Stomach (tissue), 19 donors: ENCODE measurements at regions of chr3 and their contacts with region 1.

Region 1: DNA sequence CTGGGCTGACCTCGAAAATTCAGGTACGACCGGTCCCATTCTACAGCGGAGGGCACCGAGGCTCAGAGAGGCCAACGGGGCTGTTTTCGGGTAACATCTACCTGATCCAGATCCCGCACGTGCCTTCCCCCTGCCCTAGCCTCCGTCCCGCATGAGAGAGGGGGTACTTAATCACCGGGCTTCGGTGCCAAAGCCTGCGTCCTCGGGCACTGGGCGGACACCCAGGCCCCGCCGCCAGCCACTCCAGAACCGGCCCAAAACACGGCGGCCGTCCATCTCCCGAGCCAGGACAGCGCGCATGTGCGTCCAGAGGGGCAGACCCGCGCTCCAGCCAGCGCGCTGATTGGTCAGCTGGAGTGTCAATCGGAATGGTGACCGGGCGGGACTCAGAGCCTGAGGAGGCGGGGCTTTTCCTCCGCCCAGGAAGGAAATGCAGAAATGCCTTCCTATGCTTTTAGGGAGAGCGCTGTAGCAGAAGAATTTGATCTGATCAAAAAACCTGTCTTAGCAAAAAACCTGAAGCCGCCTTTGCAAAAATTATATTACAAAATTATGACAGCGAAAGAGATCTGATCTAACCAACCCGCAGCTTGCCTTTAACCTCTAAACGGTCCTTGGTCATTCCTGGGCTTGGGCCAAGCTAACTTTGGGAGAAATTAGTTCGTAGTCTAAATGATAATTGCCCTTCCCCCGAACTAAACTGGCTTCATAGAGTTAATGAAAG is at the start of gene RPUSD3:
- DNase-seq: peak; percentile 98 to 99
- H3K4me3 ChIP-seq: peak within 1 kb of the TSS; percentile 61 to 80 (median 72)
- H3K27ac ChIP-seq: peak within 1 kb of the TSS; percentile 71 to 87 (median 82)
- H3K4me1 ChIP-seq: peaks cover 11 to 25% (median 22%) of the 10 kb centered on the region in 4 donors
- H3K27me3 ChIP-seq: no peaks in the 10 kb centered on the region
- CTCF ChIP-seq: no peak
- EP300 ChIP-seq: no peak
- POLR2A ChIP-seq: no peak
- total RNA-seq, gene RPUSD3: 6.4 to 62.9 (median 19.3) TPM

Region 2: DNA sequence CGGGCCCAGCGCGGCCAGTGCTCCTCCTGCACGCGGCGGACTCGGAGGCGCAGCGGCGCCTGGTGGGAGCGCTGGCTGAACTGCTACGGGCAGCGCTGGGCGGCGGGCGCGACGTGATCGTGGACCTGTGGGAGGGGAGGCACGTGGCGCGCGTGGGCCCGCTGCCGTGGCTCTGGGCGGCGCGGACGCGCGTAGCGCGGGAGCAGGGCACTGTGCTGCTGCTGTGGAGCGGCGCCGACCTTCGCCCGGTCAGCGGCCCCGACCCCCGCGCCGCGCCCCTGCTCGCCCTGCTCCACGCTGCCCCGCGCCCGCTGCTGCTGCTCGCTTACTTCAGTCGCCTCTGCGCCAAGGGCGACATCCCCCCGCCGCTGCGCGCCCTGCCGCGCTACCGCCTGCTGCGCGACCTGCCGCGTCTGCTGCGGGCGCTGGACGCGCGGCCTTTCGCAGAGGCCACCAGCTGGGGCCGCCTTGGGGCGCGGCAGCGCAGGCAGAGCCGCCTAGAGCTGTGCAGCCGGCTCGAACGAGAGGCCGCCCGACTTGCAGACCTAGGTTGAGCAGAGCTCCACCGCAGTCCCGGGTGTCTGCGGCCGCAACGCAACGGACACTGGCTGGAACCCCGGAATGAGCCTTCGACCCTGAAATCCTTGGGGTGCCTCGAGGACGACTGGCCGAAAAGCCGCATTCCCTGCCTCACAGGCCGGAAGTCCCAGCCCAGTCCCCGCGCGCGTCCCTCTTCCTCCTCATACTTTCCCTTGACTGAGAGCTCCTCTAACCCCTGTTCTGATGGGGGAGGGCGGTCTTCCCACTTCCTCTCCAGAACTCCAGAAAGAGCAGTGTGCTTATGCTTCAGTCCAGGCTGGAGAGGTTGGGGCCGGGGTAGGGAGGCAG is 71.6 kb after region 1 on chr3:
- intact Hi-C with region 1: loop called (anchors 10 kb)
- DNase-seq: peak; percentile 76 to 91
- H3K4me3 ChIP-seq: peak overlapping the region; percentile 58 to 68 (median 63)
- H3K27ac ChIP-seq: peak overlapping the region; percentile 84 to 94 (median 90)
- H3K4me1 ChIP-seq: peaks cover 44 to 76% (median 64%) of the 10 kb centered on the region in 4 donors
- H3K27me3 ChIP-seq: no peaks in the 10 kb centered on the region
- CTCF ChIP-seq: peak in 3 of 7 experiments; percentile 33 to 46 (median 36)
- EP300 ChIP-seq: no peak
- POLR2A ChIP-seq: no peak

Region 3: DNA sequence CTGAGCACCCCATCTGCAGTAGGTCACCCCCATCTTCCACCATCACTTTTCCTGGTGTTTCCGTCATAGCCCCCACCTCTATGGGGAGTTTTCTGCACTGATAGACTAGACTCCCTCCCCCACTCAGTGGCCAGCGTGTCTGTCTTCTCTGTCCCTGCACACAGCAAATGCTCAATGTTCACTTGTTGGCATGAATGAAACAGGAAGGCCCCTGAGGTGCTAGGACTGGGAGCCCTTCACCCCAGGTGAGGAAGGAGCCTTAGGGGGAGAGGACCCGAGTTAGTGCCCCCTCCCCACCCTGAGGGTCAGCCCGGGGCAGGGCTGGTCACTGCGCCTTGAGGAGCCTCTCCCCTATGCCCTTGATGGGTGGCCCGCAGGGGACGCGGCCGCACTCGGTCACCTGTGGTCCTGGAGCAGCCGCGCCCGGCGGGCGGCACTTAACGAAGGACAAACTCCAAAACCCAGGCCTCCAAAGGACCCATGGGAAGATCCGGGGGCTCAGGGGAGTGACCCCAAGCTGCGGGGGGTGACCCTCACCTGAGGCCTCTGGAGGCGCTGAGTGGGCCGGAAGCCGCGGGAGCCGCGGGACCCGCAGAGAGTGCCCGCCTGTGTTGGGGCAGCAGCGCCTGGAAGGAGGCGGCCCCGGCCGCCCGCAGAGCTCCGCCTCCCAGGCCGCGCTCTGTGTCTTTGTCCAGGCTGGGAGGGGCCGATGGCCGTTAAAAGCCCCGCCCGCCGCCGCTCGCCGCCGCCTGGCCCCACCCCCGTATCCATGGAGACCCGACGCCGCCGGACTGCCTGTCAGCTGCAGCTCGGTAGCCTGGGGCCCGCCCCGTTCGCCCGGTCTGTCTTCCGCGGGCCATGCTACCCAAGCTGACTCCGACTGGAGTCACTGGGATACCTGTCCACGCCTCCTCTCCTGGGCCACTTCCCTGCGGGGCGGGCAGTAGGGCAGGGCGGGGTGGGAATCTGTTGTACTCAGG is 166.9 kb after region 1 on chr3:
- intact Hi-C with region 1: no loop called
- DNase-seq: peak; percentile 98 to 99
- H3K4me3 ChIP-seq: peak overlapping the region; percentile 51 to 66 (median 62)
- H3K27ac ChIP-seq: peak overlapping the region; percentile 34 to 79 (median 75)
- H3K4me1 ChIP-seq: peaks cover 38 to 51% (median 47%) of the 10 kb centered on the region in 4 donors
- H3K27me3 ChIP-seq: no peaks in the 10 kb centered on the region
- CTCF ChIP-seq: no peak
- EP300 ChIP-seq: no peak
- POLR2A ChIP-seq: no peak